Posterior cingulate gyrus (tissue), 11 donors: ENCODE measurements at regions of chr11 and their contacts with region 1.

Region 1: DNA sequence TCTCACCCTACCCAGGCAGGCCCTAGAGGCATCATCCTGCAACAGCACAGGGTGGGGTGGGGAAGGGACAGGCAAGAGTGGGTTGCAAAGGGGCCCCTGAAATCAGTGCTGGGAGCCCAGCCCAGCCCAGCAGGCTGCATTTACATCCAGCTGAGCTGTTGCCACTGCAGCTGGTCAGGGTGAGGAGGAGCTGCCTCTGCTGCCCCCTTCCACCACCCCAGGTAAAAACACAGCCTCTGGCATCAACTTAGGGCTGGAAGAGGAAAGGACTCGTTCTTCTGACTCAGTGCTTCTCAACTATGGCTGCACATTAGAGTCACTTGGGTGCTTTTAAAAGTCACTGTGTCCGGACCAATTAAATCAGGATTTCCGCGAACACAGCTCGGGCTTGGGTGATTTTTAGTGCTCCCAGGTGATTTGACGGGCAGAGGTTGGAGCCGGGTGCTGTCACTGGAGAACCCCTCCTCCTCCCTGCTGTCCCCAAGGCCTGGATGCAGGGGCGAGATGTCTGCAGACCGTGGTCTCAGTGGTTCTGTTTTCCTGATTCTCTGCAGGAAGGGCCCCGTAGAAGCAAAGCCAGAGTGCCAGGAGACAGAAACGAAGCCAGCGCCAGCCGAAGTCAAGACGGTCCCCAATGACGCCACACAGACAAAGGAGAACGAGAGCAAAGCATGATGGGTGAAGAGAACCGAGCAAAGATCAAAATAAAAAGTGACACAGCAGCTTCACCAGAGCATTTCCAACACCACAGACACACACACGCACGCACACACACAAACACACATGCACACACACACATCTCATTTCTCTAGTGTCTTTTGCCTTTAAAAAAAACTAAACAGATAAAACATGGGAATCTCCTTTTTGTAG is 39.4 kb upstream of the TTC12 start:
- DNase-seq: peak in 5 of 10 donors; percentile 41 to 92 (median 49)

Region 2: GRCh38 chr11:113162592-113162962 is 112.4 kb before region 1 on chr11:
- intact Hi-C with region 1: loop called (anchors 10 kb)
- DNase-seq: peak in 8 of 10 donors; percentile 41 to 93 (median 54)